ENCODE measurements at regions of chr12 and their contacts with region 1.

Region 1: GRCh38 chr12:63668028-63668799 is at the start of gene DPY19L2:
- DNase-seq: peak; percentile 1 to 34 (median 5)
- H3K4me3 ChIP-seq: peak within 1 kb of the TSS; percentile 42 to 80 (median 65)
- H3K4me3 Mint-ChIP-seq: peak within 1 kb of the TSS; percentile 86 to 96
- H3K27ac ChIP-seq: no peak within 1 kb of the TSS
- H3K27ac Mint-ChIP-seq: peak within 1 kb of the TSS in 1 of 7 donors; percentile 57
- H3K4me1 ChIP-seq: peaks cover 6 to 23% of the 10 kb centered on the region in 2 donors
- H3K4me1 Mint-ChIP-seq: peaks cover 28% of the 10 kb centered on the region
- H3K27me3 ChIP-seq: peaks cover 0 to 7% of the 10 kb centered on the region in 2 donors
- H3K27me3 Mint-ChIP-seq: peaks cover 18 to 28% (median 24%) of the 10 kb centered on the region in 3 donors
- CTCF ChIP-seq: no peak
- polyA plus RNA-seq, gene DPY19L2: not detected

Region 2: DNA sequence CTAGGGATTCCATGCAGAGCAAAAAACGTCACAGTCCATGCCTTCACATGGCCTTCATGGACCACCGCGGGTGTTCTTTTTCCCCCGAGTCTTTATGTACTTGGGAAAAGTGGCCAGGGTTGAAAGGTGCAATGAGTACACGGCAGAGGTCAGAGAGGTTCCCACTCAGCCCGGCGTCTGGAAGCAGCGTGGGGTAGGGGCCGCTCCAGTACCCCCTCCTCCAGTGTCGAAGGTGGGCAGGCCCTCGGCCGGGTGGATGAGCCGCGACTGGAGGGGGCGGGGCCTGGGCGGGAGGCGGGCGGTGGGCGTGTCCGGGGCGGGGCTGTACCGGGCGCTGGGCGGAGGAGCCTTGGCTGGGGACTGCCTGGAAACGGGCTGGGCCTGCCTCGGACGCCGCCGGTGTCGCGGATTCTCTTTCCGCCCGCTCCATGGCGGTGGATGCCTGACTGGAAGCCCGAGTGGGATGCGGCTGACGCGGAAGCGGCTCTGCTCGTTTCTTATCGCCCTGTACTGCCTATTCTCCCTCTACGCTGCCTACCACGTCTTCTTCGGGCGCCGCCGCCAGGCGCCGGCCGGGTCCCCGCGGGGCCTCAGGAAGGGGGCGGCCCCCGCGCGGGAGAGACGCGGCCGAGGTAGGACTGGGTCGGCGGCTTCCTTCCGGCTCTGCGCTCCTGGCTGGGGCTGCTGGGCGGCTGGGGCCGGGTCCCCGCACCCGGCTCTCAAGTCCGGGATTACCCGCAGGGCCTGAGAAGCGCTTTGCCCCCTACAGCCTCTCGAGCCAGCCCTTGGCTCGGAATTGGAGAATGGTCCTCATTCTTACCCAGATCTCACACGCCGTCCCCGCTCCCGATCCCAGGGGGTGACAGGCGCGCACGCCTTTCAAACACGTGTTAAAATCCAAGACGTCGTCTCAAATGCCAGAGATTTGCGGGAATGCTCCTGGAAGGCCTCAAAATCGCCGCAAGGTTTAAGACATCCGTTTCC is 111.6 kb after region 1 on chr12 and contains the start of gene RXYLT1:
- intact Hi-C with region 1: no loop called
- DNase-seq: peak; percentile 60 to 70 (median 63)
- H3K4me3 ChIP-seq: peak within 1 kb of the TSS; percentile 81 to 92 (median 91)
- H3K4me3 Mint-ChIP-seq: peak within 1 kb of the TSS; percentile 99
- H3K27ac ChIP-seq: peak within 1 kb of the TSS; percentile 53 to 85
- H3K27ac Mint-ChIP-seq: peak within 1 kb of the TSS; percentile 79 to 92 (median 85)
- H3K4me1 ChIP-seq: peaks cover 19 to 30% of the 10 kb centered on the region in 2 donors
- H3K4me1 Mint-ChIP-seq: peaks cover 27% of the 10 kb centered on the region
- H3K27me3 ChIP-seq: no peaks in the 10 kb centered on the region
- H3K27me3 Mint-ChIP-seq: peaks cover 0 to 3% (median 0%) of the 10 kb centered on the region in 3 donors
- CTCF ChIP-seq: no peak
- polyA plus RNA-seq, gene RXYLT1: 4.3 to 6.5 (median 6.5) TPM

Region 3: DNA sequence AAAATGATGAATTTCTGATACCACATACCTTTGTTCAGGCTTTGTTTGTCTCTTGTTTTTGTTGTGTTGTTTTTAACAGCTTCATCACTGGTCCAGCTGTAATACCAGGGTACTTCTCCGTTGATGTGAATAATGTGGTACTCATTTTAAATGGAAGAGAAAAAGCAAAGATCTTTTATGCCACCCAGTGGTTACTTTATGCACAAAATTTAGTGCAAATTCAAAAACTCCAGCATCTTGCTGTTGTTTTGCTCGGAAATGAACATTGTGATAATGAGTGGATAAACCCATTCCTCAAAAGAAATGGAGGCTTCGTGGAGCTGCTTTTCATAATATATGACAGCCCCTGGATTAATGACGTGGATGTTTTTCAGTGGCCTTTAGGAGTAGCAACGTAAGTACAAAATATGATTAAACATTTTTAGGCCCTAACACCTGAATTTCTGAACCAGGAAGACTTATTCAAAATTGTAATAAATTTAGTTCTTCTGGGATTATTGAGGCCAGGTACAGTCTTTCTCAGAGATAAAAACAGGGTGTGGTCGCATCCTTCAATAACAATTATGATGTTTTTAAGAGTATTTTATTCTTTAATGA is 133.9 kb after region 1 on chr12:
- intact Hi-C with region 1: loop called in 1 of 2 experiments (anchors 10 kb)
- DNase-seq: peak in 2 of 3 donors; percentile 7 to 25
- H3K4me3 ChIP-seq: no peak overlapping the region
- H3K4me3 Mint-ChIP-seq: no peak overlapping the region
- H3K27ac ChIP-seq: no peak overlapping the region
- H3K27ac Mint-ChIP-seq: no peak overlapping the region
- H3K4me1 ChIP-seq: no peaks in the 10 kb centered on the region
- H3K4me1 Mint-ChIP-seq: no peaks in the 10 kb centered on the region
- H3K27me3 ChIP-seq: no peaks in the 10 kb centered on the region
- H3K27me3 Mint-ChIP-seq: no peaks in the 10 kb centered on the region
- CTCF ChIP-seq: peak; percentile 73

Region 4: DNA sequence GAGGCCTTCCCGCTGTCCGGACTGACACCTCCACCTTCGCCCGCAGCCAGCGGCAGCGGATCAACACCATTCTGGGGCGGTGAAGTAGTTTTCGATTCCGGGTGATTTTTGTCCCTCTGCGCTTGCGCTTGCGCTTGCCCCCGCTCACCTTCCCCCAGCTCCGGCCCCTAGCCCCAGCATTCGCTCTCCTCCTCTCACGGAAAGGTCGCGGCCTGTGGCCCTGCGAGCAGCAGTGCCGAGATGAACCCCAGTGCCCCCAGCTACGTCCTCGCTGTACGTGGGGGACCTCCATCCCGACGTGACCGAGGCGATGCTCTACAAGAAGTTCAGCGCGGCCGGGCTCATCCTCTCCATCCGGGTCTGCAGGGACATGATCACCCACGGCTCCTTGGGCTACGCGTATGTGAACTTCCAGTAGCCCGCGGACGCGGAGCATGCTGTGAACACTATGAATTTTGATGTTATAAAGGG is 153.6 kb after region 1 on chr12:
- intact Hi-C with region 1: no loop called
- DNase-seq: no peak
- H3K4me3 ChIP-seq: peak overlapping the region in 2 of 3 experiments; percentile 21 to 60
- H3K4me3 Mint-ChIP-seq: peak overlapping the region; percentile 78 to 89
- H3K27ac ChIP-seq: no peak overlapping the region
- H3K27ac Mint-ChIP-seq: peak overlapping the region in 1 of 7 donors; percentile 57
- H3K4me1 ChIP-seq: peaks cover 0 to 3% of the 10 kb centered on the region in 2 donors
- H3K4me1 Mint-ChIP-seq: peaks cover 7% of the 10 kb centered on the region
- H3K27me3 ChIP-seq: peaks cover 0 to 5% of the 10 kb centered on the region in 2 donors
- H3K27me3 Mint-ChIP-seq: peaks cover 5 to 16% (median 8%) of the 10 kb centered on the region in 3 donors
- CTCF ChIP-seq: no peak